PC-9 (cell line): ENCODE measurements at regions of chr2 and their contacts with region 1.

Region 1: GRCh38 chr2:148644883-148645538 is 460 bp downstream of the EPC2 start:
- DNase-seq: peak; percentile 78 to 89
- H3K4me3 ChIP-seq: peak overlapping the region; percentile 95
- H3K27ac ChIP-seq: peak overlapping the region; percentile 85
- H3K4me1 ChIP-seq: peaks cover 20% of the 10 kb centered on the region
- H3K27me3 ChIP-seq: no peaks in the 10 kb centered on the region
- CTCF ChIP-seq: peak; percentile 53

Region 2: GRCh38 chr2:148509288-148509902 is 135.6 kb before region 1 on chr2:
- CTCF ChIA-PET with region 1: no interaction called
- POLR2A ChIA-PET with region 1: no interaction called
- intact Hi-C with region 1: loop called (anchors 2 kb)
- DNase-seq: peak; percentile 63 to 80
- H3K4me3 ChIP-seq: peak overlapping the region; percentile 38; the same call in 1 of the 2 replicates
- H3K27ac ChIP-seq: no peak overlapping the region
- H3K4me1 ChIP-seq: peaks cover 9% of the 10 kb centered on the region
- H3K27me3 ChIP-seq: no peaks in the 10 kb centered on the region
- CTCF ChIP-seq: peak; percentile 79

Region 3: GRCh38 chr2:148582679-148583511 is 62.1 kb before region 1 on chr2:
- CTCF ChIA-PET with region 1: interaction called, 4 read pairs
- POLR2A ChIA-PET with region 1: no interaction called
- intact Hi-C with region 1: loop called (anchors 1 kb)
- DNase-seq: peak; percentile 32 to 91
- H3K4me3 ChIP-seq: no peak overlapping the region
- H3K27ac ChIP-seq: peak overlapping the region; percentile 93
- H3K4me1 ChIP-seq: peaks cover 23% of the 10 kb centered on the region
- H3K27me3 ChIP-seq: no peaks in the 10 kb centered on the region
- CTCF ChIP-seq: no peak

Region 4: GRCh38 chr2:148614322-148615049 is 30.5 kb before region 1 on chr2:
- CTCF ChIA-PET with region 1: no interaction called
- POLR2A ChIA-PET with region 1: interaction called, 6 read pairs
- intact Hi-C with region 1: loop called (anchors 1 kb)
- DNase-seq: peak; percentile 85 to 96
- H3K4me3 ChIP-seq: peak overlapping the region; percentile 23; the same call in 1 of the 2 replicates
- H3K27ac ChIP-seq: peak overlapping the region; percentile 99
- H3K4me1 ChIP-seq: peaks cover 41% of the 10 kb centered on the region
- H3K27me3 ChIP-seq: no peaks in the 10 kb centered on the region
- CTCF ChIP-seq: no peak

Region 5: DNA sequence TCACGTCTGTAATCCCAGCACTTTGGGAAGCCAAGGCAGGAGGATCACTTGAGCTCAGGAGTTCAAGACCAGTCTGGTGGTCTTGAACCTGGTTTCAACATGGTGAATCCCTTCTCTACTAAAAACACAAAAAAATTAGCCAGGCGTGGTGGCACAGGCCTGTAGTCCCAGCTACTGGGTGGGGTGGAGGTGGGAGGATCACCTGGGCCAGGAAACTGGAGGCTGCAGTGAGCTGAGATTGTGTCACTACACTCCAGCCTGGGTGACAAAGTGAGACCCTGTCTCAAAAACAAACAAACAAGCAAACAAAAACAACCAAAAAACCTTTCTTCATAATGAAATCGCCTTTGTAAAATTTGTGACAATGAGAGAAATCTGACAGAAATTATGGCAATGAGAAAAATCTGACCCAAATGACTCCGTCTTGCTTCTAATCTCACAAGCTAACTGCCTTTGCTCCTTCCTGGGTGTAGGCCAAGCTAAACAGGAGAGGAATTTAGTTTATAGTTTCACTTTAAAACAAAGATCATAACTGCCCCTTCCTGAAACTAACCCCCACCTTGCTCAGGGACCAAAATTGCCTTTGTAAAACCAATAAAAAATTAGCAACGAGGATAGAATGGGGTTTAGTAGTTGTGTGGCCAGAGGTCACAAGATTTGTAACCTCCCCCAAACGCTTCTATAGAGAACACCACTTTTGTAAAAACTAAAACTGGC is 169.3 kb after region 1 on chr2:
- CTCF ChIA-PET with region 1: interaction called, 15 read pairs
- POLR2A ChIA-PET with region 1: no interaction called
- intact Hi-C with region 1: no loop called
- DNase-seq: peak; percentile 31 to 86
- H3K4me3 ChIP-seq: peak overlapping the region; percentile 40; the same call in 1 of the 2 replicates
- H3K27ac ChIP-seq: peak overlapping the region; percentile 81
- H3K4me1 ChIP-seq: peaks cover 21% of the 10 kb centered on the region
- H3K27me3 ChIP-seq: no peaks in the 10 kb centered on the region
- CTCF ChIP-seq: no peak

Region 6: DNA sequence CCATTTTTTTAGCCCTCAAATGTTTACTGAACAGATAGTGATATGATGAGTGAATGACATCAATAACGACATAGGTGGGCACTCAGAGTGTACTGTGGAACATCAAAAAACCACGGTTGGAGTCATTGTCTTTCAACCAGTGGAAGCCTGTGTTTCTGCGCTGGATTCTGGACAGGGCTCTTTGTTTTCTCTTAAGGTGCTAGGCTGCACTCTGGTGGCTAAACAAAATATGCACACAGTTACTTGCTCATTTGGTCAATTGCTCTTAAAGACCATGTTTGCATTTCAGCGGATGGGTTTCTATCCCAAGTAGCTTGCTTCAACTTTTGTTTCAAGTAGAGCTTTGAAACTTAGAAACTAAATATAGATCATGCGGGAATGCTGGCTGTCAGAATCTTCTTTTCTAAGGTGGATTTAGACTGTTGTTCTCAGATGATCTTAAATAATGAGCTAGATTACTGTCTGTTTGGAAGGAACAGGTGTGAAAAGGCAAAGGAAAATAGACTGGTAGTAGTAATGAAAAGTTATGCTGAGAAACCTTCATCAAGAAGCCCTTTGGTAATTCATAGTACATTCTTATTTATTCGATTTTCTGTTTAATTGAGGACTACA is 345.0 kb after region 1 on chr2:
- CTCF ChIA-PET with region 1: no interaction called
- POLR2A ChIA-PET with region 1: no interaction called
- intact Hi-C with region 1: loop called (anchors 10 kb)
- DNase-seq: peak; percentile 36 to 56
- H3K4me3 ChIP-seq: no peak overlapping the region
- H3K27ac ChIP-seq: no peak overlapping the region
- H3K4me1 ChIP-seq: no peaks in the 10 kb centered on the region
- H3K27me3 ChIP-seq: no peaks in the 10 kb centered on the region
- CTCF ChIP-seq: peak; percentile 73